Activated CD8-positive, alpha-beta T cell treated with anti-CD3 and anti-CD28 coated beads for 36 hours (primary cell): ENCODE measurements at regions of chr19 and their contacts with region 1.

Region 1: DNA sequence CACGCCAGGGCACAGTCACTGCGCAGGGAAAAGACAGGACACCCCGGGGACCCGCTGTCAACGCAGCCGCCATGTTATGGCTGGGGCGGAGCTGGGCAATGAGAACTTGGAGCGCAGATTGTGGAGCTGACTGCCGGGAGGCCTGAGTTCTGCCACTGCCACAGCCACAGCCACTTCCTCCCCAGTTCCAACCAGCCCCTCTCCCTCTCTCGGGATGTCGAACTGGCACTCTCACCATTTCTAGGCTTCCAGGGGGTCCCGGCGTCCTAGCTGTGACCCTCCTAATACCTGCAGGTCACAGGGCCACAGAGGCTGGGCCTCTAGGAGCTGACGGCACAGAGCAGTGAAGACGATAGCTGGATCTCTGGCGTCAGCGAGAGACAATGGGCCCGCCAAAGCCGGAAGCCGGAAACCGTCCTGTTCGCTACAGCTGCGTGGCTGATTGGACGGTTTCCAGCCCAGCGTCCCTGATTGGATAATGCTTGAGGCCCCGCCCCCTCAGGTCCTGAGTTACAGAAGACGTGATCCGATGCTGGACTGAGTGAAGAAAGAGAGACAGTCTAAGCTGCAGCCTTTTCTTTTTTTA is at the start of gene ZNF506:
- DNase-seq: peak; percentile 99
- ATAC-seq: peak; percentile 83
- H3K4me3 Mint-ChIP-seq: peak within 1 kb of the TSS; percentile 98
- H3K27ac Mint-ChIP-seq: peak within 1 kb of the TSS; percentile 99
- H3K4me1 Mint-ChIP-seq: peaks cover 47% of the 10 kb centered on the region
- H3K27me3 Mint-ChIP-seq: no peaks in the 10 kb centered on the region
- CTCF ChIP-seq: no peak
- total RNA-seq, gene ZNF506: 45.5 to 48.7 TPM

Region 2: DNA sequence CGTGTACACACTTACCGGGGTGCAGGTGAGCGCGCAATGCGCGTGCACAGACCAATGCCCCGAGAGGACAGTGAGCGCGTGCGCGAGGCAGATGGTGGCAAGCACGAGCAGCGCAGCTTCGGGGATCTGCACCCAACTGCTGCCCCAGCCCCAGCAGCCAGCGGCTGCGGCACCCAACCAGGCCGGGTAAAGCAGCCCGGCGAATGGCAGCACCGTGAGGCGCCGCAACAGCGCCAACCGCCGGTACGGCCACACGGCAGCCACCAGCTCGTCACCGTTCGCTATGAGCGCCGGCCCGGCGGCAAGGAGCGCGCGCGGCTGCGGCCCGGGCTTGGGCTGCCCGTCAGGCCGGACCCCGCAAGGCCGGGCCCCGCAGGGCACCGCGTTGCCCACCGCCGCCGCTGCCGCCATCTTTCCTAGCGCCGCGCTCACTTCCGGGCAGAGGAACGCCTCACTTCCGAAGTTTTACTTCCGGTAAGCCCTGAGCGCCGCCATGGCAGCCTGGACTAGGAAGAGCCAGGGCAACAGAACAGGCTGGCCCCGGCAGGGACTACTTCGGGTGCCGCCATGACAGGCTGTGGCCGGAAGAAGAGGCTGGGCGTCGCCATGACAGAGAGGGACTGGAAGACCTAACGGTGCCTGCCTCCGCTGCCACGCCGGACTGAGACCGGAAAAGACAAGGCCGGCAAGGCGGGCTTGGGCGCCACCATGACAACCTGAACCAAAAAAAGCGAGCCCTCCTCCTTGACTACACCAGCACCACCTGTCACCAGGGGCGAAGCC is 158.0 kb before region 1 on chr19 and contains the start of gene ATP13A1:
- CTCF ChIA-PET with region 1: no interaction called
- POLR2A ChIA-PET with region 1: interaction called, 18 read pairs
- intact Hi-C with region 1: loop called (anchors 10 kb)
- DNase-seq: peak; percentile 95
- ATAC-seq: peak; percentile 69
- H3K4me3 Mint-ChIP-seq: peak within 1 kb of the TSS; percentile 88
- H3K27ac Mint-ChIP-seq: peak within 1 kb of the TSS; percentile 97
- H3K4me1 Mint-ChIP-seq: peaks cover 29% of the 10 kb centered on the region
- H3K27me3 Mint-ChIP-seq: no peaks in the 10 kb centered on the region
- CTCF ChIP-seq: no peak
- total RNA-seq, gene ATP13A1: 52.4 to 53.1 TPM

Region 3: GRCh38 chr19:19776041-19777008 is 45.1 kb before region 1 on chr19:
- CTCF ChIA-PET with region 1: interaction called, 4 read pairs
- POLR2A ChIA-PET with region 1: interaction called, 18 read pairs
- intact Hi-C with region 1: loop called (anchors 2 kb)
- DNase-seq: peak; percentile 97
- ATAC-seq: peak; percentile 99
- H3K4me3 Mint-ChIP-seq: peak overlapping the region; percentile 97
- H3K27ac Mint-ChIP-seq: peak overlapping the region; percentile 94
- H3K4me1 Mint-ChIP-seq: peaks cover 48% of the 10 kb centered on the region
- H3K27me3 Mint-ChIP-seq: no peaks in the 10 kb centered on the region
- CTCF ChIP-seq: no peak

Region 4: GRCh38 chr19:19782783-19783182 is 38.7 kb before region 1 on chr19:
- CTCF ChIA-PET with region 1: no interaction called
- POLR2A ChIA-PET with region 1: interaction called, 18 read pairs
- intact Hi-C with region 1: loop called (anchors 2 kb)
- DNase-seq: peak; percentile 82
- ATAC-seq: peak; percentile 77
- H3K4me3 Mint-ChIP-seq: peak overlapping the region; percentile 8
- H3K27ac Mint-ChIP-seq: peak overlapping the region; percentile 85
- H3K4me1 Mint-ChIP-seq: peaks cover 52% of the 10 kb centered on the region
- H3K27me3 Mint-ChIP-seq: no peaks in the 10 kb centered on the region
- CTCF ChIP-seq: no peak

Region 5: GRCh38 chr19:19835560-19836038 is 14.1 kb after region 1 on chr19:
- CTCF ChIA-PET with region 1: no interaction called
- POLR2A ChIA-PET with region 1: interaction called, 11 read pairs
- intact Hi-C with region 1: no loop called
- DNase-seq: no peak
- ATAC-seq: no peak
- H3K4me3 Mint-ChIP-seq: no peak overlapping the region
- H3K27ac Mint-ChIP-seq: no peak overlapping the region
- H3K4me1 Mint-ChIP-seq: no peaks in the 10 kb centered on the region
- H3K27me3 Mint-ChIP-seq: no peaks in the 10 kb centered on the region
- CTCF ChIP-seq: no peak

Region 6: DNA sequence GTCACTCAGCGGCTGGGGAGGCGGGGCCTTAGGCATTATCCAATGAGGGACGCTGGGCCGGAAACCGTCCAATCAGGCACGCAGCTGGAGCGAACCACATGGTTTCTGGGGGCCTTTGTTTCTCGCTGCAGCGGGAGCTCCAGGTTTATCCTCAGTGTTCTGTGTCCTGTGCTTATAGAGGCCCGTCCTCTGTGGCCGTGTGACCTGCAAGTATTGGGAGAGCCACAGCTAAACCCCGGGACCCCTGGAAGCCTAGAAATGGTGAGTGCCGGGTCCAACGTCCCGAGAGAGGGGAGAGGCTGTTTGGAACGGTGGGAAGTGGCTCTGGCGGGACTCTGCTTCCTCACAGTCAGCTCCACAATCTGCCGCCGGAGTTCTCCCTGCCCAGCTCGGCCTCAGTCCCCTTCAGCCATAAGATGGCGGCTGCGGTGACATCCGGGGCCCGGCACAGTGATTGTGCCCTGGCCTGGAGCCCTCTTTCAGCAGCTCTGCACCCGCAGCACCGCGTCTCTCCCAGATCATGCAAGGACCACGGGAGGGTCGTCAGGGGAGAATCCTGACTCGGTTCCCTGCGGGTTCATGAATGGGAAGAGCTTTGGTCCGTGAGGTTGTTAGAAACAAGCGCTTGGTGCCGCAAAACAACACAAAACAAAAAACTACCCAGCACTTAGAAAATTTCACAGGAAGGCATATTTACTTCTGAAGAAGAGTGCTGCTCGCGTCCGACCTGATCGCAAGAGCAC is 44.5 kb after region 1 on chr19 and contains the start of gene ZNF253:
- CTCF ChIA-PET with region 1: interaction called, 5 read pairs
- POLR2A ChIA-PET with region 1: interaction called, 30 read pairs
- intact Hi-C with region 1: no loop called
- DNase-seq: peak; percentile 99
- ATAC-seq: peak; percentile 93
- H3K4me3 Mint-ChIP-seq: peak within 1 kb of the TSS; percentile 98
- H3K27ac Mint-ChIP-seq: peak within 1 kb of the TSS; percentile 98
- H3K4me1 Mint-ChIP-seq: peaks cover 24% of the 10 kb centered on the region
- H3K27me3 Mint-ChIP-seq: no peaks in the 10 kb centered on the region
- CTCF ChIP-seq: no peak
- total RNA-seq, gene ZNF253: 10.8 to 13.5 TPM

Region 7: GRCh38 chr19:19900729-19901444 is 79.4 kb after region 1 on chr19 and contains the start of gene ZNF93:
- CTCF ChIA-PET with region 1: interaction called, 3 read pairs
- POLR2A ChIA-PET with region 1: interaction called, 17 read pairs
- intact Hi-C with region 1: no loop called
- DNase-seq: peak; percentile 98
- ATAC-seq: peak; percentile 96
- H3K4me3 Mint-ChIP-seq: peak within 1 kb of the TSS; percentile 83
- H3K27ac Mint-ChIP-seq: peak within 1 kb of the TSS; percentile 93
- H3K4me1 Mint-ChIP-seq: peaks cover 38% of the 10 kb centered on the region
- H3K27me3 Mint-ChIP-seq: no peaks in the 10 kb centered on the region
- CTCF ChIP-seq: no peak
- total RNA-seq, gene ZNF93: 17.2 to 17.8 TPM